GM12878 (cell line): ENCODE measurements at regions of chr14 and their contacts with region 1.

Region 1: GRCh38 chr14:64465191-64465822 is at the start of gene AKAP5:
- DNase-seq: no peak
- ATAC-seq: peak; percentile 89
- H3K4me3 ChIP-seq: peak within 1 kb of the TSS; percentile 79
- H3K27ac ChIP-seq: peak within 1 kb of the TSS; percentile 29; the same call in 1 of the 2 replicates
- H3K4me1 ChIP-seq: peaks cover 33% of the 10 kb centered on the region
- H3K27me3 ChIP-seq: no peaks in the 10 kb centered on the region
- CTCF ChIP-seq: 0 out of 6 replicates have a peak, but pooled peaks of 1 of the 3 experiments have one; percentile 4
- EP300 ChIP-seq: no peak
- POLR2A ChIP-seq: peak; percentile 75
- RAD21 ChIP-seq: no peak
- polyA plus RNA-seq, gene AKAP5: 0.45 to 1.5 TPM

Region 2: GRCh38 chr14:64349741-64350490 is 115.4 kb before region 1 on chr14:
- CTCF ChIA-PET with region 1: interaction called, 25 read pairs
- POLR2A ChIA-PET with region 1: no interaction called
- RAD21 ChIA-PET with region 1: interaction called, 3 read pairs
- SMC1A ChIA-PET with region 1: interaction called, 4 read pairs
- in situ Hi-C with region 1: no loop called
- intact Hi-C with region 1: no loop called
- DNase-seq: no peak
- ATAC-seq: no peak
- H3K4me3 ChIP-seq: no peak overlapping the region
- H3K27ac ChIP-seq: no peak overlapping the region
- H3K4me1 ChIP-seq: no peaks in the 10 kb centered on the region
- H3K27me3 ChIP-seq: no peaks in the 10 kb centered on the region
- CTCF ChIP-seq: no peak
- EP300 ChIP-seq: no peak
- POLR2A ChIP-seq: no peak
- RAD21 ChIP-seq: no peak

Region 3: GRCh38 chr14:64421166-64421565 is 44.1 kb before region 1 on chr14:
- CTCF ChIA-PET with region 1: no interaction called
- POLR2A ChIA-PET with region 1: no interaction called
- RAD21 ChIA-PET with region 1: interaction called, 3 read pairs
- SMC1A ChIA-PET with region 1: interaction called, 29 read pairs
- in situ Hi-C with region 1: no loop called
- intact Hi-C with region 1: no loop called
- DNase-seq: no peak
- ATAC-seq: no peak
- H3K4me3 ChIP-seq: no peak overlapping the region
- H3K27ac ChIP-seq: no peak overlapping the region
- H3K4me1 ChIP-seq: peaks cover 3% of the 10 kb centered on the region; the same call in 1 of the 2 replicates
- H3K27me3 ChIP-seq: no peaks in the 10 kb centered on the region
- CTCF ChIP-seq: no peak
- EP300 ChIP-seq: no peak
- POLR2A ChIP-seq: no peak
- RAD21 ChIP-seq: no peak

Region 4: DNA sequence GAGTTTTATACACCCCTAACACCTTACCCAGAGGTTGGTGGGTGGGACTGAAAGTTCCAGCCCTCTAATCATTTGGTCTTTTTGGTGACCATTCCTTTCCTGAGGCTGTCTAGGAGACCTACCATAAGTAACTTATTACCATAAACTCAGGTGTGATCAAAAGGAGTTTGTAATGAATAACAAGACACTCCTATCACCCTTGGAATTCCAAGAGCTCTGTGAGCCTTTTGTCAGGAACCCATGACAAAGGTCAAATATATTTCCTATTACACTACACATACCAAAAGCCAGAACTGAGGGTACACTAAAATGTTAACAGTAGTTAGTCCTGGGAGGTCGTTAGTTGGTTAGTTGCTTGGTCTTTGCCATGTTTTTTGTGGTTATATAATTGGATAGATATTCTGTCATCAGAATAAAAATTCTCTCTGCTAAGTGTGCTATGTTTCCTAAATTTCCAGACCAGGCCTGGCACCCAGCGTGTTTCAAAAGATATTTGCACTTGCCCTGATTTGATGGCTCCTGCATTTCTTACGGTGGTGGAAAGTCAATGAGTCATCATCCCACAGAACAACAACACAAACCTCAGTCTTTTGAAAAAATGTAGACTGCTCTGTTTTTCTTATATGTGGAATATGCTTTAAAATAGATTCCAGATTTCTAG is 27.0 kb before region 1 on chr14:
- CTCF ChIA-PET with region 1: interaction called, 60 read pairs
- POLR2A ChIA-PET with region 1: interaction called, 4 read pairs
- RAD21 ChIA-PET with region 1: interaction called, 6 read pairs
- SMC1A ChIA-PET with region 1: interaction called, 95 read pairs
- in situ Hi-C with region 1: no loop called
- intact Hi-C with region 1: no loop called
- DNase-seq: no peak
- ATAC-seq: no peak
- H3K4me3 ChIP-seq: no peak overlapping the region
- H3K27ac ChIP-seq: no peak overlapping the region
- H3K4me1 ChIP-seq: no peaks in the 10 kb centered on the region
- H3K27me3 ChIP-seq: no peaks in the 10 kb centered on the region
- CTCF ChIP-seq: no peak
- EP300 ChIP-seq: no peak
- POLR2A ChIP-seq: no peak
- RAD21 ChIP-seq: no peak

Region 5: DNA sequence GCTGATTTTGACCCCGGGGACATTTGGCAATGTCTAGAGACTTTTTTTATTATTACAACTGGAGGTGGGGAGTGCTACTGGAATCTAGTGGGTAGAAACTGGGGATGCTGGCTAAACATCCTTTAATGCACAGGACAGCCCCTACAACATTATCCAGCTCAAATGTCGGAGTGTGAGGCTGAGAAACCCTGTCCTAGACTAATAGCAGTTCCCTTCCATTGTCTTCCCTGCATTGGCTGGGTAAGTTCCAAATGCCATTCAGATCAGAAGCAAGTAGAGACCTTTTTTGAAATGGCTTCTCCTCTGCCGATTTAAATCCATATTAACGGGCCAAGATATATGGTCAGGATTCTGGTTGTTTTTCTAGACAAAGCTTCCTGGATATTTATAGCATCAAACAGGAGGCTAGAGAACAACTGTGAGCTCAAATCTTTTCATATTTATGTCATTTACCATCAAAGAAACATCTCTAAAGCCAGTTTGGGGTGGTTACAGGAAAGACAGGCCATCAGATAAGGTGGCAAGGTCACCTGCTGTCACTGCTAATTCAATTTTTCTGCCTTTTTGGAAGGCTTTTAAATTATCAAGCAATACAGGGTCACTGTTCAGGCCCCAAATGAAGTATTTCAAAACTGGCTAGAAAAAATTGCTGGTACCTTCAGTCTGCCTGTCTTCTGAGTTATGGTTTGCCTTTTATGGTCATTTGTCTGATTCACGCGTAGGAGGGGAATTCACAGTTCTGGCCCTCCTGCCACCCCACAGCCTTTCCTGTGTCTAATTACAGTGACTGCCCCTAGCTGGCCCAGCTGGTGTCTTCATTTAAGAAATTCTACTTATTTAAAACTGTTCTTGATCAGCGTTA is 20.1 kb before region 1 on chr14:
- CTCF ChIA-PET with region 1: interaction called, 60 read pairs
- POLR2A ChIA-PET with region 1: interaction called, 19 read pairs
- RAD21 ChIA-PET with region 1: interaction called, 7 read pairs
- SMC1A ChIA-PET with region 1: interaction called, 95 read pairs
- in situ Hi-C with region 1: no loop called
- intact Hi-C with region 1: loop called (anchors 2 kb)
- DNase-seq: peak; percentile 84
- ATAC-seq: peak; percentile 99
- H3K4me3 ChIP-seq: no peak overlapping the region
- H3K27ac ChIP-seq: peak overlapping the region; percentile 97
- H3K4me1 ChIP-seq: peaks cover 22% of the 10 kb centered on the region
- H3K27me3 ChIP-seq: no peaks in the 10 kb centered on the region
- CTCF ChIP-seq: peak in 2 of 3 experiments; percentile 15 to 20; a peak in 1 of 6 replicates
- EP300 ChIP-seq: peak; percentile 75 to 77; a peak in 2 of 4 replicates
- POLR2A ChIP-seq: peak; percentile 37; the same call in 1 of the 2 replicates
- RAD21 ChIP-seq: no peak

Region 6: GRCh38 chr14:64503478-64504309 is 38.4 kb after region 1 on chr14 and contains the start of gene ZBTB25:
- CTCF ChIA-PET with region 1: interaction called, 11 read pairs
- POLR2A ChIA-PET with region 1: interaction called, 4 read pairs
- RAD21 ChIA-PET with region 1: interaction called, 7 read pairs
- SMC1A ChIA-PET with region 1: interaction called, 11 read pairs
- in situ Hi-C with region 1: no loop called
- intact Hi-C with region 1: no loop called
- DNase-seq: peak; percentile 83
- ATAC-seq: peak; percentile 71
- H3K4me3 ChIP-seq: peak within 1 kb of the TSS; percentile 91
- H3K27ac ChIP-seq: peak within 1 kb of the TSS; percentile 98
- H3K4me1 ChIP-seq: peaks cover 6% of the 10 kb centered on the region
- H3K27me3 ChIP-seq: no peaks in the 10 kb centered on the region
- CTCF ChIP-seq: no peak
- EP300 ChIP-seq: peak; percentile 82 to 86
- POLR2A ChIP-seq: peak; percentile 85
- RAD21 ChIP-seq: no peak
- polyA plus RNA-seq, gene ZBTB25: 4.1 to 5.6 TPM

Region 7: DNA sequence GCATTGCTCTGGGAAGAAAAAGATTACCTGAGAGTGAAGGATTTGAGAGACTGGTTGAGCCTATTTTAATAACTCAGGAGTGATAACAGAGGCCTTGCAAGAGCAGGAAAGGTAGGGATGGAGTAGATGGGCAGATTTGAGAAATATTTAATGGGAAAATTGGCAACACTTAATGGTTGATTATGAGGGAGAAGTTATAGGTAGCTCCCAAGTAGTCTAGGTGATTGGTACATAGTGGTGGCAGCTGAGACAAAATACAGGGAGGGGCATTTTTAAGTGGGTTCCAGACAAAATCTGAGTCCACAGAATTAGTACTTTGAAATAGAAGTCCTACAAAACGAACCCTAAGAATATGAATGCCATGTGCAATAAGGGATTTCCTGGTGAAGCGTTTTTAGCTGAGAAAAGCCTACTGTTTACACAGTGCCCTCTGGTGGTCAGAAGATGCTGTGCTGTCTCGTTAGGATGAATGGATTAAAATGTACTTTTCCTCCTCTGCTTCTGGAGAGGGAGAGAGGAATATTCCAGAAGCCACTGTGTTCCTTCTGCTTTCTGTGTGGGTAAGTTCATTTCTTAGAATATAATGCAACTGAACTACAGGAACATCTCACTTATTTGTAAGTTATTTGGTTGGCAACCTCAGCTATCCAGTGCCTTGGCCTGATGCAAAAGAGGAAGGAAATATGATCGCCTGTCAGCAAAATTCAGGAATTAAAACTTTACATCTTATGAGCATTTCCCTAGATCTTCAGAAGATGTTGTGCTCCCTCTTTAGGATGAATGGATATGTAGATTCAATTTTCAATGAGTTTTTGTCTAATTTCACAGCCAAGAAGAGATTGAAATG is 45.7 kb after region 1 on chr14:
- CTCF ChIA-PET with region 1: interaction called, 11 read pairs
- POLR2A ChIA-PET with region 1: interaction called, 4 read pairs
- RAD21 ChIA-PET with region 1: interaction called, 5 read pairs
- SMC1A ChIA-PET with region 1: interaction called, 6 read pairs
- in situ Hi-C with region 1: no loop called
- intact Hi-C with region 1: no loop called
- DNase-seq: no peak
- ATAC-seq: peak; percentile 50
- H3K4me3 ChIP-seq: peak overlapping the region; percentile 40; the same call in 1 of the 2 replicates
- H3K27ac ChIP-seq: peak overlapping the region; percentile 68
- H3K4me1 ChIP-seq: peaks cover 25% of the 10 kb centered on the region
- H3K27me3 ChIP-seq: no peaks in the 10 kb centered on the region
- CTCF ChIP-seq: peak; percentile 82 to 95 (median 84)
- EP300 ChIP-seq: no peak
- POLR2A ChIP-seq: no peak
- RAD21 ChIP-seq: peak; percentile 68